HCT116 (cell line): ENCODE measurements at regions of chrX and their contacts with region 1.

Region 1: GRCh38 chrX:77597090-77597489 is 149.9 kb downstream of the FGF16 start:
- DNase-seq: no peak
- ATAC-seq: no peak
- H3K4me3 ChIP-seq: no peak overlapping the region
- H3K27ac ChIP-seq: no peak overlapping the region
- H3K4me1 ChIP-seq: no peaks in the 10 kb centered on the region
- H3K27me3 ChIP-seq: no peaks in the 10 kb centered on the region
- CTCF ChIP-seq: peak in 2 of 3 experiments; percentile 22 to 23; a peak in 2 of 6 replicates
- POLR2A ChIP-seq: no peak
- RAD21 ChIP-seq: peak; percentile 30

Region 2: DNA sequence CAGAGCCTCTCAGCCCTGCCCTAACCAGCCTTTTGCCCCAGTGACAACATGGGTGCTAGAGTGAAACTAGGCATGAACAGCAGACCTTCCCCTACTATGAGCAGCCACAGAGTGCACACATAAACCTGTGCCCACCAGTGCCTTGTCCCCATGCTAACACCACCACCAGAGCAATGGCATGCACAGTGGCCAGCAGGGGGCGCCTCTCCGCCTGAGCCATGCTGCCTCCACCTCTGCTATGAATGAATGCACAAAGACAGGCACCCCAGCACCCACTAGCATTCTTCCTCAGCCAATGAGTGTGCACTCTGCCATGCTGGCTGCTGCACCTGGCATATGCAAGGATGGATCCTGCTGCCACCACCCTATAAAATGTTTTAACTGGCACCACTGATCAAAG is 436.8 kb before region 1 on chrX:
- CTCF ChIA-PET with region 1: no interaction called
- POLR2A ChIA-PET with region 1: no interaction called
- RAD21 ChIA-PET with region 1: no interaction called
- intact Hi-C with region 1: loop called (anchors 5 kb)
- DNase-seq: no peak
- ATAC-seq: peak; percentile 76
- H3K4me3 ChIP-seq: no peak overlapping the region
- H3K27ac ChIP-seq: no peak overlapping the region
- H3K4me1 ChIP-seq: no peaks in the 10 kb centered on the region
- H3K27me3 ChIP-seq: no peaks in the 10 kb centered on the region
- CTCF ChIP-seq: peak in 2 of 3 experiments; percentile 59 to 60; a peak in 4 of 6 replicates
- POLR2A ChIP-seq: no peak
- RAD21 ChIP-seq: peak; percentile 33

Region 3: GRCh38 chrX:77527233-77528001 is 69.7 kb before region 1 on chrX:
- CTCF ChIA-PET with region 1: no interaction called
- POLR2A ChIA-PET with region 1: no interaction called
- RAD21 ChIA-PET with region 1: no interaction called
- intact Hi-C with region 1: no loop called
- DNase-seq: no peak
- ATAC-seq: no peak
- H3K4me3 ChIP-seq: no peak overlapping the region
- H3K27ac ChIP-seq: no peak overlapping the region
- H3K4me1 ChIP-seq: no peaks in the 10 kb centered on the region
- H3K27me3 ChIP-seq: no peaks in the 10 kb centered on the region
- CTCF ChIP-seq: no peak
- POLR2A ChIP-seq: no peak
- RAD21 ChIP-seq: no peak